Natural killer cell (primary cell): ENCODE measurements at regions of chr19 and their contacts with region 1.

Region 1: DNA sequence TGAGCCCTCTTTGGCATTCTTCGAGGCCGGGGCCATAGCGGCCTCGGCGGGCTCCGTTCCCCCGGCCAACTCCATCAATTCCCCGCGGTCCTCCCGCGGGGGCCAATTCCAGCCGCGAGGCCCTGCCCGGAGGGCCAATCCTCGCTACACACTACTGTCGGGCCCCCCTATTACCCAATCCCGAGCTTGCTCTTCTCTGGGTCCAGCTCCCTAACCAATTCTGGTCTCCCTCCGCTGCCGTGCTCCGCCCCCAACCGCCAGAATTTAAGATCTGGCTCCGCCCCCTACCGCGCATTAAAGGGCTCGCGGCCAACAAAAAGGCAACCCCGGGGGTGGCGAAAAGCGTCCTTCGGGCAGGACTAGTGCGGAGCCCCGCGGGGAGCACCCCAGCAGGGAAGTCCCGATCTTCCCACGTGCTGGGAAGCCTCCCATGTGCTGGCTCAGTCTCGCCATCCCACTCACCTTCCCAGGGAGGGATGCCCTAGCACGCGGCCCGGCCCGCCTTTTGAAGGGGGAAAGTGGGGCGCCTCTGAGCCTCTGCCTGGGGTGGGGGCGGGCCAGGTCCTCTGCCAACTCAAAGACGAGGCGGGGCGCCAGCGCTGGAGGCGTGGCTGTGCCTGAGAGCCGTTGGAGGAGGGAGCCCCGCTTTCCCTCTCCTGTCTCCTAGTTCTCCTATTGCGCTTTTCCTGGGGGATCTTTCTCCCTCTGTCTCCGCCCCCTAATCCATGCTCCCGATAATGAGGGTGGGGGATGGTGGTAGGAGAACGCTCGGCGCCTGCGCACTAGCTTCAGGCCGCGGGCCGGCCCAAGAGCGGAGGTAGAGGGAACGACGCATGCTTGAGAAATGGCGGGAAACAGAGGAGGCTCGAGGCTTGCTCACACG is 3.5 kb downstream of the LIPE start:
- DNase-seq: peak; percentile 91 to 96
- ATAC-seq: peak; percentile 90 to 97 (median 93)
- H3K4me3 ChIP-seq: peak overlapping the region; percentile 86
- H3K4me3 Mint-ChIP-seq: peak overlapping the region; percentile 98
- H3K27ac ChIP-seq: peak overlapping the region; percentile 85
- H3K27ac Mint-ChIP-seq: peak overlapping the region; percentile 90 to 99
- H3K4me1 ChIP-seq: peaks cover 35% of the 10 kb centered on the region
- H3K4me1 Mint-ChIP-seq: peaks cover 33 to 47% of the 10 kb centered on the region in 2 donors
- H3K27me3 ChIP-seq: no peaks in the 10 kb centered on the region
- H3K27me3 Mint-ChIP-seq: no peaks in the 10 kb centered on the region
- CTCF ChIP-seq: no peak

Region 2: DNA sequence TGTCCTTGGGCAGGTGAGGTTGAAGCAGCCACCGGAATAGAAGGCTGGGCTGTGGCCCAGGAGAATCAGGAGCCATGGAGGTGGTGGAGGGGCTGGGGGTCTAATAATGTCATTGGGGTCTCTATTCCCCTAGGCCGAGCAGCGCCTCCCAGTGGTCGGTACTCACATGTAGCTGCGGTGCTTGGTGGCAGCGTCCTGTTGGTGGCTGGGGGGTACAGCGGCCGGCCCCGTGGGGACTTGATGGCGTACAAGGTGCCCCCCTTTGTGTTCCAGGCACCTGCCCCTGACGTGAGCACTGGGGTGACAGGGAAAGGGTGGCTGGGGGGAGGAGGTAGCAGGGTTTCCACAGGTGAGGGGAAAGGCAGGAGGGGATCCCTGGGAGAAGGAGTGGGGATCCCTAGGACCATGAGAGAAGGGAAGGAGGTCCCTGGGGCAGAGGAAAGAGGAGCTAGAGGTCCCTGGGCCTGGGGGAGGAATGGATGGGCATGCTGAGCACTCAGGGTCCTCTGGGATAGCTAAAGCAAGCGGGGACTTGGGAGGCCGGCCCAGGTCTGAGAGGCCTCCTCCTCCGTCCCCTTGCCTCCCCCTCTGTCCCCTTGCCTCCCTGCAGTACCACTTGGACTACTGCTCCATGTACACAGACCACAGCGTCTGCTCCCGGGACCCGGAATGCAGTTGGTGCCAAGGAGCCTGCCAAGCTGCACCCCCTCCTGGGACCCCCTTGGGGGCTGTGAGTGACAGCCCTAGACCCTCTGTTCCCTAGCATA is 80.2 kb before region 1 on chr19:
- intact Hi-C with region 1: no loop called
- DNase-seq: no peak
- ATAC-seq: no peak
- H3K4me3 ChIP-seq: no peak overlapping the region
- H3K4me3 Mint-ChIP-seq: no peak overlapping the region
- H3K27ac ChIP-seq: no peak overlapping the region
- H3K27ac Mint-ChIP-seq: no peak overlapping the region
- H3K4me1 ChIP-seq: no peaks in the 10 kb centered on the region
- H3K4me1 Mint-ChIP-seq: no peaks in the 10 kb centered on the region
- H3K27me3 ChIP-seq: no peaks in the 10 kb centered on the region
- H3K27me3 Mint-ChIP-seq: no peaks in the 10 kb centered on the region
- CTCF ChIP-seq: no peak

Region 3: GRCh38 chr19:42396381-42397262 is 27.1 kb before region 1 on chr19:
- intact Hi-C with region 1: loop called (anchors 1 kb)
- DNase-seq: peak; percentile 93 to 97
- ATAC-seq: peak; percentile 94 to 97 (median 94)
- H3K4me3 ChIP-seq: peak overlapping the region; percentile 87
- H3K4me3 Mint-ChIP-seq: peak overlapping the region; percentile 85
- H3K27ac ChIP-seq: peak overlapping the region; percentile 72
- H3K27ac Mint-ChIP-seq: peak overlapping the region; percentile 94 to 98
- H3K4me1 ChIP-seq: peaks cover 27% of the 10 kb centered on the region
- H3K4me1 Mint-ChIP-seq: peaks cover 23 to 46% of the 10 kb centered on the region in 2 donors
- H3K27me3 ChIP-seq: no peaks in the 10 kb centered on the region
- H3K27me3 Mint-ChIP-seq: peaks cover 4 to 7% of the 10 kb centered on the region in 2 donors
- CTCF ChIP-seq: no peak

Region 4: GRCh38 chr19:42401365-42402303 is 22.1 kb before region 1 on chr19:
- intact Hi-C with region 1: loop called (anchors 1 kb)
- DNase-seq: peak; percentile 78 to 87
- ATAC-seq: peak; percentile 60 to 80 (median 69)
- H3K4me3 ChIP-seq: peak overlapping the region; percentile 45
- H3K4me3 Mint-ChIP-seq: peak overlapping the region; percentile 89
- H3K27ac ChIP-seq: peak overlapping the region; percentile 33
- H3K27ac Mint-ChIP-seq: peak overlapping the region; percentile 68 to 86
- H3K4me1 ChIP-seq: peaks cover 31% of the 10 kb centered on the region
- H3K4me1 Mint-ChIP-seq: peaks cover 20 to 59% of the 10 kb centered on the region in 2 donors
- H3K27me3 ChIP-seq: no peaks in the 10 kb centered on the region
- H3K27me3 Mint-ChIP-seq: no peaks in the 10 kb centered on the region
- CTCF ChIP-seq: peak; percentile 87

Region 5: GRCh38 chr19:42440357-42441048 is 16.8 kb after region 1 on chr19:
- intact Hi-C with region 1: loop called (anchors 1 kb)
- DNase-seq: peak; percentile 75 to 90
- ATAC-seq: peak; percentile 55 to 68 (median 59)
- H3K4me3 ChIP-seq: no peak overlapping the region
- H3K4me3 Mint-ChIP-seq: peak overlapping the region; percentile 13
- H3K27ac ChIP-seq: no peak overlapping the region
- H3K27ac Mint-ChIP-seq: peak overlapping the region in 1 of 2 donors; percentile 64
- H3K4me1 ChIP-seq: peaks cover 16% of the 10 kb centered on the region
- H3K4me1 Mint-ChIP-seq: peaks cover 19% of the 10 kb centered on the region in 2 donors
- H3K27me3 ChIP-seq: no peaks in the 10 kb centered on the region
- H3K27me3 Mint-ChIP-seq: peaks cover 0 to 4% of the 10 kb centered on the region in 2 donors
- CTCF ChIP-seq: peak; percentile 96

Region 6: DNA sequence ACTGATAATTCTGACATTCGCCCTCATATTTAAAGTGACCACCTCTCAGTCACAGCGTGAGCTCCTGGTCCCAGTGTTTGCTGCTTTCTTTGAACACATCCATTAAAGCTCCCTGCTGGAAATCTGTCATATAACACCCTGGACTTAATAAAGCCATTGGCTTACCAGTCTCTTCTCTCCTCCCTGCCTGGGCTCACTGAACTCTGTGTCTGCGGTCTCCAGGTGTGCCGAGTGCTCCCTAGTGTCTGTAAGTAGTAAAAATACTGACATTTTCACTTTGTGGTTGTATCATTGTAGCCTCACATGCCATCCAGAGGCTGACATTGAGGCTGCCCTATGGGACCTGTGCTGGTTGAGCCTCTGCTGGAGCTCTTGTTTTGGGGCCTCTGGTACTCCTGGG is 605.2 kb after region 1 on chr19:
- intact Hi-C with region 1: no loop called
- DNase-seq: no peak
- ATAC-seq: no peak
- H3K4me3 ChIP-seq: no peak overlapping the region
- H3K4me3 Mint-ChIP-seq: no peak overlapping the region
- H3K27ac ChIP-seq: no peak overlapping the region
- H3K27ac Mint-ChIP-seq: no peak overlapping the region
- H3K4me1 ChIP-seq: no peaks in the 10 kb centered on the region
- H3K4me1 Mint-ChIP-seq: no peaks in the 10 kb centered on the region
- H3K27me3 ChIP-seq: no peaks in the 10 kb centered on the region
- H3K27me3 Mint-ChIP-seq: peaks cover 18 to 40% of the 10 kb centered on the region in 2 donors
- CTCF ChIP-seq: no peak